WTC11 (cell line): ENCODE measurements at regions of chr1 and their contacts with region 1.

Region 1: DNA sequence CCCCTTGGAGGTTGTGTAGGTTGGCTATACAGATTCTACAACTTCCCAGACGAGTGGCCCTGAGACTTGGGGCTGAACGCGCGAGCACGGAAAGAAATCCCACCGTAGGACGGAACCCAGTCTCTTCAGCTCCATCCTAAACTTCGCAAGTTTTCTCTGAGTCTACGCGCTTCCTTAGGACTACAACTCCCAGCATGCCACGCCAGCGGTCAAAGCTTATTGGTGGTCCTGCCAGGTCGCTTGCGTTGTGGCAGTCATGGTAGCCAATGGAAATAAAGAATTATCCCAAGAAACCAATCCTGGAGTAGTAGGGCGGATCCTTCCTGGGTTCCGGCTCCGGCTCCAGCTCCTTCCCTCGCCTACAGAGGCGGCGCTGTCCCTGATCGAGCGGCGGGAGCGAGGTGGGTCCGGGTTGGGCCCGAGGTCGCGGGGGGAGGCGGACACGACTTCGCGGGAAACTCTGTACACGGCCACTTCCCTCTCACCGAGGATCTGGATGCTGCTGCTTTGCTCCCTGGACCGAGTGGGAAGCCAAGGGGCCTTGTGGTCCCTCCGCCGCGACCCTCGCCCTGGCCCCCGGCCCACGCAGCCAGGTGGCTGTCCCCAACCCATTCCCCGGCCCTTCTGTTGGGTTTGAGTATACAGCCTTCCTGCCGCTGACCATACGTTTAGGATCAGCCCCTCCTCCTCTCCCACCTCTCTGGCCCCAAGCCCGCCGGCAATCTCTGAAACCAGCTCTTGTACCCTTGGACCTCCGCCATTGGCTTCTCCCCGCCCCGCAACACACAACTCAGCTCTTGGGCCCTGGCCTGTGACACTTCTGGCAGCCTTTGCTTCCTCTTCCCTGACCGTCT is at the start of gene ZNF691:
- DNase-seq: peak; percentile 94
- ATAC-seq: peak; percentile 99
- H3K4me3 Mint-ChIP-seq: peak within 1 kb of the TSS; percentile 95
- H3K27ac Mint-ChIP-seq: peak within 1 kb of the TSS; percentile 90
- H3K4me1 Mint-ChIP-seq: peaks cover 24% of the 10 kb centered on the region
- H3K27me3 Mint-ChIP-seq: no peaks in the 10 kb centered on the region; the same call in 1 of the 2 replicates
- CTCF ChIP-seq: no peak
- total RNA-seq, gene ZNF691: 16.6 to 18.5 TPM (median 18.0 TPM) in 3 replicates

Region 2: DNA sequence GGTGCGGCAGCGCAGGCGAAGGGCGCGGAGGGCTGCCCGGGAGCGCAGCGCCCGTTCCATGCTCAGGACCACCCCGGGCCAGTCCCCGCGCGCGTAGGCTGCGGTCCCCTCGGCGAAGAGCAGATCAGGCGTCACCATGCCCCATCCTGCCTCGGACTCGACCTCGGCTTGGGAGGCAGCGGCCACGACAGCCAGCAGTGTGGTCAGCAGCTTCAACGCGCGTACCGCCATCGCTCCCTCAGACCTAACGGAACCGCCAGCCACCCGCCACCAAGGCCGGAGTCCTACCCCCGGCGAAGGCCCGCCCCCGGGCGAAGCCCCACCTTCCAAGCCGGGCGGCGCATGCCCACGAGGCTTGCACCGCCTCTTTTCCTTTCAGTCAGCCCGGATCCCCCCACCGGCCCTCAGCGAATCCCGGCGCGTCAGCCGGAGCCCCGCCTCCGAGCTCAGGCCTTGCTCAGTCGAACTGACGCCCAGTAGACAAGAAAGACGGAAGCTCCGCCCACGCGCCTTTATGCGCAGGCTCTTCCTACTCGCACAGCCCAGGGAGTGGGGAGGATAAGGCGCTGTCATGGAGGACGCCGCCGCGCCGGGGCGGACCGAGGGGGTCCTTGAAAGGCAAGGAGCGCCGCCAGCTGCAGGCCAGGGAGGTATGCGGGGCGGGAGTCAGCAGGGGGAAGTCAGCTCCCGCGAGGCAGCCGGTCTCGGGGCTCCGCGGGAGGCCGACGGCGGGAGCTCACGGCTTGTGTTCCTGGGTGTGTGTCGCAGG is 79.6 kb before region 1 on chr1 and contains the starts of genes C1orf50 and P3H1:
- CTCF ChIA-PET with region 1: interaction called, 21 read pairs
- POLR2A ChIA-PET with region 1: interaction called, 8 read pairs
- DNase-seq: peak; percentile 100
- ATAC-seq: peak; percentile 91
- H3K4me3 Mint-ChIP-seq: no peak within 1 kb of the TSS; the same call in 1 of the 2 replicates
- H3K27ac Mint-ChIP-seq: peak within 1 kb of the TSS; percentile 86
- H3K4me1 Mint-ChIP-seq: peaks cover 12% of the 10 kb centered on the region
- H3K27me3 Mint-ChIP-seq: no peaks in the 10 kb centered on the region
- CTCF ChIP-seq: no peak
- total RNA-seq, gene C1orf50: 5.1 to 6.3 TPM (median 5.3 TPM) in 3 replicates
- total RNA-seq, gene P3H1: 78.1 to 95.1 TPM (median 80.3 TPM) in 3 replicates

Region 3: GRCh38 chr1:42816585-42817434 is 29.7 kb before region 1 on chr1 and contains the starts of genes ERMAP and SVBP:
- CTCF ChIA-PET with region 1: interaction called, 17 read pairs
- POLR2A ChIA-PET with region 1: interaction called, 7 read pairs
- DNase-seq: peak; percentile 91
- ATAC-seq: peak; percentile 83
- H3K4me3 Mint-ChIP-seq: peak within 1 kb of the TSS; percentile 78
- H3K27ac Mint-ChIP-seq: peak within 1 kb of the TSS; percentile 88
- H3K4me1 Mint-ChIP-seq: peaks cover 17% of the 10 kb centered on the region
- H3K27me3 Mint-ChIP-seq: no peaks in the 10 kb centered on the region
- CTCF ChIP-seq: no peak
- total RNA-seq, gene ERMAP: 2.6 to 4.2 TPM (median 3.1 TPM) in 3 replicates
- total RNA-seq, gene SVBP: 28.7 to 31.3 TPM (median 30.7 TPM) in 3 replicates

Region 4: DNA sequence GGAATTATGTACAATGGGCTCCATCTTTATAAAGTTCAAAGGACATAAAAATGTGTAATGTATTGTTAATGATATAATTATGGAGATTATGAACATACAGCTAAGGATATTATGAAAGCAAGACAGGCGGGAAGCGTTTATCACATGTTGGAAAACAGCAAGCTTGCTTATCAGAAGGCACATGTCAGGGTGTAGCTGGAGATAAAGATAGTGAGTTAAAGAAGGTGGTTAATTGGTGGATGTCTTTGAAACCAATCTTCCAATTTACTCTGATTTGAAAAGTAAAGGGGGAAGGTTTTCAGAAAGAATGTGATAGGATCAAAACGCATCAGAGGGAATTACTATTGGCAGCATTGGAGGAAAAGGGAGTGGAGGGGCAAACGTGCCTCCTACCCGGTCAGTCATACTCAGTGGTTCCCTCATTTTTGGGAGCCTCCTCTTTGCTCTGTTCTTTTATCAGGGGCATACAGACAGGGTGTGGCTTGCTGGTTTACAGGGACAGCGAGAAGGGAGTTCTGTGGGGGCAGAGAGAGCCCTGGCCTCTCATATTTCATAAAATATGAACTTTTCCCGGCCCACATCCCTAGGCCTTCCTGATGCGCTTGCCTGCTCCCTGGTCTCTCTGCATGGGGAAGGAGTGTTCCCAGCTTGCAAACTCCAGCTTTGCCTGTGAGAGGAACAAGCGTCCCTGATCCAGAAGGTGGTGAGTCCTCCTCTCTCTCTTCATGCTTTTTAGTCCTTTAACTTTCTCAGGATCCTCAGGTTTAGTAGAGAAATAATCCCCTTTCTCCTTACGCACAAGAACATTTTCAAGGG is 21.2 kb before region 1 on chr1:
- CTCF ChIA-PET with region 1: interaction called, 17 read pairs
- POLR2A ChIA-PET with region 1: interaction called, 7 read pairs
- DNase-seq: no peak
- ATAC-seq: no peak
- H3K4me3 Mint-ChIP-seq: no peak overlapping the region
- H3K27ac Mint-ChIP-seq: 0 out of 2 replicates have a peak overlapping the region, but pooled peaks have one; percentile 15
- H3K4me1 Mint-ChIP-seq: peaks cover 21% of the 10 kb centered on the region
- H3K27me3 Mint-ChIP-seq: no peaks in the 10 kb centered on the region
- CTCF ChIP-seq: no peak

Region 5: GRCh38 chr1:42833981-42834380 is 12.5 kb before region 1 on chr1:
- CTCF ChIA-PET with region 1: interaction called, 17 read pairs
- POLR2A ChIA-PET with region 1: no interaction called
- DNase-seq: no peak
- ATAC-seq: no peak
- H3K4me3 Mint-ChIP-seq: no peak overlapping the region
- H3K27ac Mint-ChIP-seq: no peak overlapping the region
- H3K4me1 Mint-ChIP-seq: peaks cover 3% of the 10 kb centered on the region; the same call in 1 of the 2 replicates
- H3K27me3 Mint-ChIP-seq: no peaks in the 10 kb centered on the region
- CTCF ChIP-seq: no peak

Region 6: DNA sequence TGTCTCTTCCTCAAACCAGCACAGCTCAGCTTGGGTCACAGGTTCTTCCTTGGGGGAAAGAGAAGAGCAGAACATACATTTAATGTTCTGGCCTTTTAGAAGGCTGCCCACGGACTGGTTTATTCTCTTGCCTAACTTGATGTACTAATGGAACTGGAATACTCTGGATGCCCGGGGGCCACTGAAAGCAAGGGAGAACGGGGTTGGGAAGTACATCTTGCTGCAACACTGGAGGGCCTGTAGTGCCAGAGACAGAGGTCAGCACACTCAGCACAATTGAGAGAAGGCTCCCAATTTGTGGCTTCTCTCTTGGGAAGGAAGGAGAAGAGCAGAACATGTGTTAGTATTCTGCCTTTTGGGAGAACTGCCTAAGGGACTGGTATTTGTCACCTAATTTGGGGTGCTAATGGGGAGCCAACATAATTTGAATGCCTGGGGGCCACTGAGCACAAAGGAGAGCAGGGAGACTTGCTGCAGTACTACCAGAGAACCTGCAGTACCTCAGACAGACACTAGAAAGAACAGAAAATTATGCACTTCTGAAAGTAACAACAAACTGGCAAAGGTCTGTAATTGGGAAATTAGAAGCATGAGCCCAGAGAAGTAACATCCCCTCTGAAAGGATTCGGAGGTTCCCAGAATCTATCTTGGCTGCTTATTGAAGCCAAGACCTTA is 14.0 kb after region 1 on chr1:
- CTCF ChIA-PET with region 1: interaction called, 10 read pairs
- POLR2A ChIA-PET with region 1: no interaction called
- DNase-seq: no peak
- ATAC-seq: peak; percentile 75
- H3K4me3 Mint-ChIP-seq: no peak overlapping the region
- H3K27ac Mint-ChIP-seq: no peak overlapping the region
- H3K4me1 Mint-ChIP-seq: no peaks in the 10 kb centered on the region
- H3K27me3 Mint-ChIP-seq: peaks cover 14% of the 10 kb centered on the region
- CTCF ChIP-seq: 0 out of 2 replicates have a peak, but pooled peaks have one; percentile 15

Region 7: GRCh38 chr1:42913426-42914091 is 67.1 kb after region 1 on chr1:
- CTCF ChIA-PET with region 1: interaction called, 16 read pairs
- POLR2A ChIA-PET with region 1: no interaction called
- DNase-seq: peak; percentile 53
- ATAC-seq: peak; percentile 94
- H3K4me3 Mint-ChIP-seq: no peak overlapping the region
- H3K27ac Mint-ChIP-seq: no peak overlapping the region
- H3K4me1 Mint-ChIP-seq: no peaks in the 10 kb centered on the region; the same call in 1 of the 2 replicates
- H3K27me3 Mint-ChIP-seq: peaks cover 7% of the 10 kb centered on the region
- CTCF ChIP-seq: peak; percentile 72